Naive thymus-derived CD8-positive, alpha-beta T cell (primary cell): ENCODE measurements at regions of chr6 and their contacts with region 1.

Region 1: GRCh38 chr6:137341681-137342195 is 122.6 kb upstream of the IFNGR1 start:
- DNase-seq: peak; percentile 18 to 78 (median 32)
- ATAC-seq: peak; percentile 53 to 79
- H3K4me3 Mint-ChIP-seq: peak overlapping the region in 9 of 10 donors; percentile 9 to 89 (median 72)
- H3K27ac Mint-ChIP-seq: peak overlapping the region in 2 of 10 donors; percentile 20 to 52
- H3K4me1 Mint-ChIP-seq: peaks cover 1 to 26% (median 14%) of the 10 kb centered on the region in 4 donors
- H3K27me3 Mint-ChIP-seq: peaks cover 0 to 3% (median 0%) of the 10 kb centered on the region in 5 donors

Region 2: GRCh38 chr6:137415127-137415833 is 73.5 kb after region 1 on chr6:
- POLR2A ChIA-PET with region 1: interaction called, 15 read pairs
- DNase-seq: peak; percentile 12 to 80 (median 58)
- ATAC-seq: peak; percentile 93 to 97
- H3K4me3 Mint-ChIP-seq: peak overlapping the region; percentile 77 to 91 (median 85)
- H3K27ac Mint-ChIP-seq: peak overlapping the region; percentile 71 to 92 (median 87)
- H3K4me1 Mint-ChIP-seq: peaks cover 6 to 14% (median 13%) of the 10 kb centered on the region in 4 donors
- H3K27me3 Mint-ChIP-seq: peaks cover 0 to 4% (median 0%) of the 10 kb centered on the region in 5 donors

Region 3: GRCh38 chr6:137705160-137706082 is 363.7 kb after region 1 on chr6:
- POLR2A ChIA-PET with region 1: no interaction called
- DNase-seq: peak; percentile 42 to 74 (median 61)
- ATAC-seq: no peak
- H3K4me3 Mint-ChIP-seq: no peak overlapping the region
- H3K27ac Mint-ChIP-seq: peak overlapping the region in 8 of 10 donors; percentile 4 to 98 (median 74)
- H3K4me1 Mint-ChIP-seq: peaks cover 13 to 52% (median 39%) of the 10 kb centered on the region in 4 donors
- H3K27me3 Mint-ChIP-seq: peaks cover 0 to 13% (median 4%) of the 10 kb centered on the region in 5 donors